Activated CD4-positive, alpha-beta memory T cell treated with anti-CD3 and anti-CD28 coated beads, Interleukin-2, amount 10 ng/mL, durations not matched to agents 7 days and 5 days (primary cell): ENCODE measurements at regions of chr6 and their contacts with region 1.

Region 1: DNA sequence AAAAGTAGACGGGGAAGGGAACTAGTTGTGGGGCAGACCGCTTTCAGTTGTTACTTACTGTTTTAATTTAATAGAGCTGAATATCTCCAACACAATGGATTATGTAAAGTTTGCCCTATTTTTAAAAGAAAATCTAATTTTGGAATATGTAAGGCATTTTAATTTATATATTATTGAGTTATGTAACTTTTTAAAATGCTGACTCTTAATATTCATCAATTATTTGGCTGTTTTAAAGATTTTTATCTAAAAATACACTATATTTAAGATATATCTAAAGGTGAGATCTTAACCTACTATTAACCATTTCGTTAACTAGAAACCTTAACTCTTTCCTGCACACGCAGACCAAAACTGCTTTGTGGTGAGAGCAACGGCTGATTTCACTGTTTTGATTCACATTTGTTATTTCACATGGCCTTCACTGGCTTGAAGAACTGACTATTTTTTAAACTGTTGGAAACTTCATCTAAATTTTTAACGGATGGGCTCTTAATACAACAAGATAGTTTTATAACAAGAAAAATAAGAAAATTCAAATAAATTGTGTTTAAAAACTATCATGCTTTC is 87.9 kb downstream of the HUS1B start:
- DNase-seq: no peak
- H3K4me3 Mint-ChIP-seq: no peak overlapping the region
- H3K27ac Mint-ChIP-seq: peak overlapping the region; percentile 68
- H3K4me1 Mint-ChIP-seq: peaks cover 47% of the 10 kb centered on the region
- H3K27me3 Mint-ChIP-seq: no peaks in the 10 kb centered on the region

Region 2: DNA sequence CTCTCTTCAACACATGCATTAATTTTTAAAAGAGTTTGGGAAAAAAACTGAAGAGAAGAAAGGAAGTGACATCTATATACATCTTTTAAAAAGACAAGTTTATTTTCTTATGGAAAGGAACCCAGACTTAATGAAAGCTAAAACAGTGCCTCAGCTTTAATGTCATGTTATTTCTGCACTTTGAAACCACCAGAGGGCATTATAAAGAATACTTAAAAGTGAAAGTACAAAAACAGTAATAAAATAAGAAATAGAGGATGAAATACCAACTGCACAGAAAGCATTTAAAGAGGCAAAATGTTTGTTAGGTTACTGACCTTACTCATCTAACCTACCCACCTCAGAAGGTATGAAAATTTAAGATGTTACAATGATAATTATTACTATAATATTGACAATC is 10.9 kb before region 1 on chr6:
- CTCF ChIA-PET with region 1: interaction called, 5 read pairs
- POLR2A ChIA-PET with region 1: interaction called, 11 read pairs
- DNase-seq: no peak
- H3K4me3 Mint-ChIP-seq: peak overlapping the region; percentile 24
- H3K27ac Mint-ChIP-seq: peak overlapping the region; percentile 62
- H3K4me1 Mint-ChIP-seq: peaks cover 45% of the 10 kb centered on the region
- H3K27me3 Mint-ChIP-seq: no peaks in the 10 kb centered on the region